Heart left ventricle (tissue), 16 donors: ENCODE measurements at regions of chr9 and their contacts with region 1.

Region 1: GRCh38 chr9:73531658-73532057 is 380.0 kb downstream of the ANXA1 start:
- DNase-seq: no peak
- ATAC-seq: no peak
- H3K4me3 ChIP-seq: no peak overlapping the region
- H3K27ac ChIP-seq: no peak overlapping the region
- H3K4me1 ChIP-seq: no peaks in the 10 kb centered on the region
- H3K27me3 ChIP-seq: no peaks in the 10 kb centered on the region
- CTCF ChIP-seq: no peak
- POLR2A ChIP-seq: no peak

Region 2: GRCh38 chr9:73426269-73426668 is 105.4 kb before region 1 on chr9:
- intact Hi-C with region 1: loop called in 1 of 10 experiments (anchors 10 kb)
- DNase-seq: no peak
- ATAC-seq: no peak
- H3K4me3 ChIP-seq: no peak overlapping the region
- H3K27ac ChIP-seq: no peak overlapping the region
- H3K4me1 ChIP-seq: no peaks in the 10 kb centered on the region
- H3K27me3 ChIP-seq: no peaks in the 10 kb centered on the region
- CTCF ChIP-seq: no peak
- POLR2A ChIP-seq: no peak

Region 3: DNA sequence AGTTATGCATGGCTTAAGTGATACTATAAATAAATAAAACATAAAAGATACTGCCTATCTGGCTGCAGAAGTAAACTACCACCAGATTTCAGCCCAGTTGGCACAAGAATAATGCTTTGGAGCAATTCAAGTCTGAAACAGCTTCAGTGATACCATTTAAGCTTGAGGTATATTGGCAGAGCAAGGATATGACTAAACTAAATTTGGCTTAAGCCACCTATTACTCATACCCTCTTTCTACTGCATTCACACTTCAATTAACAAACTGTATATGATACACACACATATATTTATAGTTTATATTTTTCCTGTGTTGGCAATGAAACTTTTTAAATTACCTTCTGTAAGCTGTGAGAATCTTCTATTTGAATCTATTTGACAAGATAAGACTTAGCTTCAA is 51.9 kb after region 1 on chr9:
- intact Hi-C with region 1: loop called in 1 of 10 experiments (anchors 10 kb)
- DNase-seq: no peak
- ATAC-seq: peak in 3 of 4 donors; percentile 61 to 85 (median 66)
- H3K4me3 ChIP-seq: no peak overlapping the region
- H3K27ac ChIP-seq: no peak overlapping the region
- H3K4me1 ChIP-seq: peaks cover 0 to 4% (median 0%) of the 10 kb centered on the region in 12 donors
- H3K27me3 ChIP-seq: no peaks in the 10 kb centered on the region
- CTCF ChIP-seq: no peak
- POLR2A ChIP-seq: no peak